Right ventricle myocardium inferior (tissue), 1 donor: ENCODE measurements at regions of chr6 and their contacts with region 1.

Region 1: GRCh38 chr6:157981395-157982296 is at the start of gene SYNJ2:
- DNase-seq: peak; percentile 89
- ATAC-seq: peak; percentile 93
- total RNA-seq, gene SYNJ2: 15.0 TPM

Region 2: DNA sequence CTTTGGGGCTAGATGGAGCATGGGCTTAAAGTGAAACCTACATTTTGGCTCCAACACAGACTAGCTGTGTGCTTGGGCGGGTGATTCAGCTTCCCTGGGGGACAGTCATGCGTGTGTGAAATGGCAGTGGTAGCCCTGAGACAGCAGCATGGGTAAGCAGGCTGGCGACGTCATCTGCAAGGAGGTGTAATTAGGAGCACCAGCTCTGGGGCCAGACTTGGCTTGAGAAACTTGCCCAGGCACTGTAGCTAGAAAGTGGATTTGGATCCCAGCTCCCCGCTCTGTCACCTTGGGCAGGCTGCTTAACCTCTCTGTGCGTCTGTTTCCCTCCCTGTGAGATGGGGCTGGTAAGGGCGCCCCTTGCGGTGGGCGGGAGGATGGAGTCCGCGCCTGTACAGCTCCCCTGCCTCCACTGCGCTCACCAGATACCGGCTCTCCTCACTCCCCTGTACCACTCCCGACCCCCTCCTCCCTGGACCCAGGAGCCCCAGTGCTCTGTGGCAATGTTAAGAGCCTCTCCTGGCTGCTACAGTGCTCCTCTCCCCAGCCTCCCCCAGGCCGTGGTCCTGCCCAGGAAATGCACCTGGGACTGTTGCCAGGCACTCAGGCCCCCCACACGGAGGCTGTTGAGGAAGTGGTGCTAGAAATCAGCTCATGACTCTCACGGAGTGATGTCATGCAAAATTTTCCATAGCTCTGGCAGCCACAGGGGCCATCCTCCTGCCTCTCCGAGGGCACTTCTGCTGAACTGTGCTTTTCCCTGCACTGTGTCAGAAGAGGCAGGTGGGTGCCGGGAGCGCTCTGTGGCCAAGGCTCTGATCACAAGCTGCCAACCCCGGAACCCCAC is 44.6 kb after region 1 on chr6:
- intact Hi-C with region 1: loop called (anchors 5 kb)
- DNase-seq: peak; percentile 89
- ATAC-seq: peak; percentile 73

Region 3: DNA sequence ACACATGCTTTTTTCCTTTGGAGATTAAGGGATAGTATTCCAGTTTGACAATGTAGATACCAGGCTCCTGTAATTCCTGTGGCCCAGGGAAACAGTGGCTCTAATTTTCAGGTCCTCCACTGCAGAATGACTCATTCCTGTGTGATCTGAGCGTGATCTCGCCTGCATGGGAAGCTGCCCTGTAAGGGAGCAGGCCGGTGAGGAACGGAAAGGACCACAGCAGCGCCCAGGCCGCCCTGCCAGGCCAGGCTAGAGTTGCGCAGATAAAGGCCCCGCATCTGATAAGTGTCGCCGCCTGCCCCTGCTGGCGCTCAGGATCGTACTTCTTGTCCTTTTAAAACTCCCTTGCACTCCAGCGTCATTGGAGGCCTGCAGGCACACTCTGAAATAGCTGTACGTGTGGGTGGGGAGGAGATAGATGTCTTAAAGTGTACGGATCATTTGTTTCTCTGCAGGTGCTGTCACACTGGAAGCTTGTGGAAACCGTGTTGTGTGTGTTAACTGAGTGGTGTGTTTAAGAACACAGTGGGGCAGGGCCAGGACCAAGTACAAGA is 60.7 kb after region 1 on chr6:
- intact Hi-C with region 1: loop called (anchors 2 kb)
- DNase-seq: no peak
- ATAC-seq: peak; percentile 63

Region 4: DNA sequence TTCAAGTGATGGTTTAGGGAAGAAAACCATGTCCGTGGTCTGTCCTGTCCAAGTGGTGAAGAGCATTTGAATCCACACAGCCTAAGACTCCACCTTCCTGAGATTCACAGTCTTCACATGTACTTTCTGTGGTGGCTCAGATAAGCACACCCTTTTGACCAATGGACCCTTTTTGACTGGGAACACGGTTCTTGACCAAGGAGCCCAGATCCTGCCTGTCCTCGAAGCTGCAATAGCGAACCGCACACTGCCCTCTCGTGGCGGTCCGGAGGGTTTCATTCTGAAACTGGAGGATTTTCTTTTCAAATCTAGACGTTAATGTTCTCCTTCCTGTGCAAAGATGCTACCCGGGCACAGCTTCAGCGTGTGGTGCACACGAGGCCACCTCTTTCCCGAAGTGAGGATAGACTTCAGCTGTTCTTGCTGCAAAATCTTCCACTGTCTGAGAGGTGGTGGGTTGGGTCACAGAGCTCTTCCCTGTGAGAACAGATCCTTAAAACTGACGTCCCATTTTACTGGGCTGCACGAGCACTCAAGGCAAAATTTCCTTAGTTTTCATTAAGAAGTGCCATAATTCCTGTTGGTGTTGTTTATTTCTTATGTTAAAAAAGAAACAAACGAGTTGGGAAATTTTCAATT is 90.6 kb after region 1 on chr6:
- intact Hi-C with region 1: loop called (anchors 1 kb)
- DNase-seq: no peak
- ATAC-seq: peak; percentile 66

Region 5: DNA sequence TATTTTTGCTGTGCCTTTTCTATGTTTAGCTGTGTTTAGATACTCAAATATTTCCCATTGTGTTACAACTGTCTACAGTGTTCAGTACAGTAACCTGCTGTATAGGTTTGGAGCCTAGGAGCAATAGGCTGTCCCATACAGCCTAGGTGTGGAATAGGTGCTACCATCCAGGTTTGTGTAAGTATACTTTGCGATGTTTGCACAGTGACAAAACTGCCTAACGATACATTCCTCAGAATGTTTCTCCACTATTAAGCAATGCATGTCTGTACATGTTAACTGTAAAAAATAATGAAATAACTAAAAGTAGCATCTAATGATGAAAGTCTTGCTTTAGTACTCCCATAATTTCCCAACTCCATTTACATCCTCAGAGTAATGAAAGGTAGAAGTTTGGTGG is 140.4 kb after region 1 on chr6:
- intact Hi-C with region 1: no loop called
- DNase-seq: no peak
- ATAC-seq: no peak